K562 (cell line): ENCODE measurements at regions of chr4 and their contacts with region 1.

Region 1: DNA sequence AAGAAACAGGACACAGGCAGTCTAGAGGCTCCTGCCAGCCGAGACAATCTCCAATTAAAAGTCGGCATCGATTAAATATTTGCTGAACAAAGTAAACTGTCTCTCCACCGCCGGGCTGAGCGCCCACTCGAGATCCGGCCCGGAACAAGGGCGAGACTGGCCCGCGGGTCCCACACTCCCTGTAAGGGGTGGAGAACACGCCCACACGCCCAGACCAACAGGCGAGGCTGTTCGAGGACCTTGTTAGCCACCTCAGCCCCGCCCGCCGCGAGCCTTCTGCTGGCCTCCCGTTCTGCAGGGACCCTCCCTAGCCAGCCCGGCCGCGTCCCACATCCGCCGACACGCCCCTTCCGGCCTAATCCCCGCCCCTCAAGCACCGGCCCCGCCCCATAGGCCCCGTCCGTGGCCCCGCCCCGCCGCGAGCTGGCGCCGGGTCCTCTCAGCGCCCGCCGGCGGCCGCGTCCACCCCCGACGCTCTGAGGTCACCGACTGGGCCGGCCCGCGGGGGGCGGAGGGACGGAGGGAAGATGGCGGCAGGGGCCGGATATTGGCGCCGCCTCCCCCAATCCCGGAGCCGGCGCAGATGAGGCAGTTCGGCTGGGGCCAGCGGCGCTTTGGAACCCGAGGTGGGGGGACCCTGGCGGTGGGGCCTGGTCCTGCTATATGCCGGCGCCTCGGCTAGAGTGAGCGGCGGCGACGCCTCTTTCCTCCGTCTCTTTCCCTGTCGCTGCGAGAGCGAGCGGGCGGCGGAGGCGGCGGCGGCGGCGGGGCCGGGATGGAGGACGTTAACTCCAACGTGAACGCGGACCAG is at the start of gene SLAIN2:
- DNase-seq: peak; percentile 98
- ATAC-seq: peak; percentile 89
- H3K4me3 ChIP-seq: peak within 1 kb of the TSS; percentile 88
- H3K27ac ChIP-seq: peak within 1 kb of the TSS; percentile 98
- H3K4me1 ChIP-seq: peaks cover 8 to 42% of the 10 kb centered on the region in 2 experiments; a peak in 4 of 5 replicates
- H3K27me3 ChIP-seq: no peaks in the 10 kb centered on the region
- CTCF ChIP-seq: peak in 2 of 3 experiments; percentile 4 to 43; a peak in 3 of 6 replicates
- EP300 ChIP-seq: no peak; the same call in 1 of the 2 replicates
- POLR2A ChIP-seq: peak; percentile 95
- RAD21 ChIP-seq: peak in 1 of 2 experiments; percentile 24; a peak in 1 of 4 replicates
- polyA plus RNA-seq, gene SLAIN2: 3.5 to 6.2 TPM

Region 2: GRCh38 chr4:48329976-48330375 is 11.2 kb before region 1 on chr4:
- CTCF ChIA-PET with region 1: no interaction called
- POLR2A ChIA-PET with region 1: interaction called, 16 read pairs
- in situ Hi-C with region 1: no loop called
- intact Hi-C with region 1: no loop called
- DNase-seq: no peak
- ATAC-seq: no peak
- H3K4me3 ChIP-seq: no peak overlapping the region
- H3K27ac ChIP-seq: no peak overlapping the region
- H3K4me1 ChIP-seq: peaks cover 0 to 19% of the 10 kb centered on the region in 2 experiments; a peak in 3 of 5 replicates
- H3K27me3 ChIP-seq: no peaks in the 10 kb centered on the region
- CTCF ChIP-seq: no peak
- EP300 ChIP-seq: no peak
- POLR2A ChIP-seq: no peak
- RAD21 ChIP-seq: no peak

Region 3: DNA sequence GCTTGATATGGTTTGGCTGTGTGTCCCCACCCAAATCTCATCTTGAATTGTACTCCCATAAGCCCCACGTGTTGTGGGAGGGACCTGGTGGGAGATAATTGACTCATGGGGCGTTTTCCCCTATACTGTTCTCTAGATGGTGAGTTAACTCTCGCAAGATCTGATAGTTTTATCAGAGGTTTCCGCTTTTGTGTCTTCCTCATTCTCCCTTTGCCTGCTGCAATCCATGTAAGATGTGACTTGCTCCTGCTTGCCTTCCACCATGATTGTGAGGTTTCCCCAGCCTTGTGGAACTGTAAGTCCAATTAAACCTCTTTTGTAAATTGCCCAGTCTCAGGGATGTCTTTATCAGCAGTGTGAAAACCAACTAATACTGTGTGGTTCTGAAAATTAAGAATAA is 11.6 kb after region 1 on chr4:
- CTCF ChIA-PET with region 1: no interaction called
- POLR2A ChIA-PET with region 1: interaction called, 10 read pairs
- in situ Hi-C with region 1: no loop called
- intact Hi-C with region 1: no loop called
- DNase-seq: no peak
- ATAC-seq: no peak
- H3K4me3 ChIP-seq: no peak overlapping the region
- H3K27ac ChIP-seq: no peak overlapping the region
- H3K4me1 ChIP-seq: no peaks in the 10 kb centered on the region
- H3K27me3 ChIP-seq: no peaks in the 10 kb centered on the region
- CTCF ChIP-seq: no peak
- EP300 ChIP-seq: no peak
- POLR2A ChIP-seq: no peak
- RAD21 ChIP-seq: no peak

Region 4: GRCh38 chr4:48653217-48654014 is 312.2 kb after region 1 on chr4:
- CTCF ChIA-PET with region 1: no interaction called
- POLR2A ChIA-PET with region 1: no interaction called
- in situ Hi-C with region 1: no loop called
- intact Hi-C with region 1: no loop called
- DNase-seq: peak in 1 of 4 experiments; percentile 32
- ATAC-seq: peak; percentile 77
- H3K4me3 ChIP-seq: no peak overlapping the region
- H3K27ac ChIP-seq: no peak overlapping the region
- H3K4me1 ChIP-seq: peaks cover 0 to 5% of the 10 kb centered on the region in 2 experiments; a peak in 1 of 5 replicates
- H3K27me3 ChIP-seq: no peaks in the 10 kb centered on the region
- CTCF ChIP-seq: no peak
- EP300 ChIP-seq: no peak
- POLR2A ChIP-seq: no peak
- RAD21 ChIP-seq: no peak